ENCODE measurements at regions of chr3 and their contacts with region 1.

Region 1: DNA sequence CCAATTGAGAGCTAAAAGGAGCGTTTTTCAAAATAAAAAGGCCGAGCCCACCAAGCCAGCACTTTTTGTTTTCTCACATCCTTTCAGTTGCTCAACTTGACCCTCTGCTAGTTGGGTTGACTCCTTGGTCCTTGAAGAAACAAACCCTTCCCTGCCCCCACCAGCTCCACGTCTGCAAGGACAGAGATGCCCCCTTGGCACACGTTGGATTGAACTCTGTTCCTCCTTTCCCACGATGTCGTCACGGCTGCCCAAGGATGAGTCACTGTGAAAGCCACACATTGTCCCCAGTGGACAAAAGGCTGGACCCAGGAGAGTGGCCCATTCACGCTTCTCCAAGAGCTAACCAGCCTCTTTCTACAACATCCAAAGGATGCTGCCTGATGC is 43.0 kb upstream of the SPATA12 start:
- DNase-seq: no peak
- ATAC-seq: no peak

Region 2: GRCh38 chr3:55639884-55640765 is 1377.3 kb before region 1 on chr3:
- intact Hi-C with region 1: no loop called
- DNase-seq: no peak
- ATAC-seq: no peak

Region 3: GRCh38 chr3:56969851-56970250 is 47.6 kb before region 1 on chr3:
- intact Hi-C with region 1: loop called (anchors 2 kb)
- DNase-seq: no peak
- ATAC-seq: no peak

Region 4: DNA sequence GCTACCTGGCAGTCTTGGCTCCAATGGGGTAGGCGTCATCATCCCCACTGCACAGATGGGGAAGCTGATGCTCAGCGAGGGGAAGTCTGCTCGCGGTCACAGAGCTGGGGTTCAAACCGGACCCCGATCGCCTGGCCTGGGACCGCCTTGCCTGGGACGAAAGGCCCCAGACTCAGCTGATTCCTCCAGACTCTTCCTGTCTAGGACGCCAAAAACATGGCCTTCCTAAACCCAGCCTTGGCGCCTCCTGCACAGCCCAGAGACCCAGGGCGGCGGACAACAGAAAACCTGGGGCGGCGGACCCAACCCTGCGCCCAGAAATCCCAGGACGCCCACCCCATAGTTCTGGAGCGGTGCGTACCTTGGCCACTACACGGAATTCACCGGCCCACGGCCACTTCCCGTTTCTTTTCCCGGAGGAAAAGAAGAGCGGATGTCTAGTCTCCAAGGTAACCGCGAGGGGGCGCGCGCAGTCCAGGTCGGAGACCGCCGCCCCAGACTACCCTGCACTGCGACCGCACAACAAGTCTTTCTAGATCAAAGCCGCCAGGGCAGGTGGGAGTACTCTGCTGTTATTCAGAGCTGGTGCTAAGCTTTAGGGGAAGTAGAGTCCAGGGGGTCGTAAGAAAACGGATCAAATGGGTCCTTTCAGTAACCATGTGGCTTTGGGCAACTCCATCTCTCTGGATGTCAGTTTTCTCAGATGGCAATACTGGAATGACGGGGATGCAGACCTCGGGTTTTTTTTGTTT is 152.6 kb after region 1 on chr3:
- intact Hi-C with region 1: no loop called
- DNase-seq: peak; percentile 81
- ATAC-seq: peak; percentile 82